ENCODE measurements at regions of chr5 and their contacts with region 1.

Region 1: DNA sequence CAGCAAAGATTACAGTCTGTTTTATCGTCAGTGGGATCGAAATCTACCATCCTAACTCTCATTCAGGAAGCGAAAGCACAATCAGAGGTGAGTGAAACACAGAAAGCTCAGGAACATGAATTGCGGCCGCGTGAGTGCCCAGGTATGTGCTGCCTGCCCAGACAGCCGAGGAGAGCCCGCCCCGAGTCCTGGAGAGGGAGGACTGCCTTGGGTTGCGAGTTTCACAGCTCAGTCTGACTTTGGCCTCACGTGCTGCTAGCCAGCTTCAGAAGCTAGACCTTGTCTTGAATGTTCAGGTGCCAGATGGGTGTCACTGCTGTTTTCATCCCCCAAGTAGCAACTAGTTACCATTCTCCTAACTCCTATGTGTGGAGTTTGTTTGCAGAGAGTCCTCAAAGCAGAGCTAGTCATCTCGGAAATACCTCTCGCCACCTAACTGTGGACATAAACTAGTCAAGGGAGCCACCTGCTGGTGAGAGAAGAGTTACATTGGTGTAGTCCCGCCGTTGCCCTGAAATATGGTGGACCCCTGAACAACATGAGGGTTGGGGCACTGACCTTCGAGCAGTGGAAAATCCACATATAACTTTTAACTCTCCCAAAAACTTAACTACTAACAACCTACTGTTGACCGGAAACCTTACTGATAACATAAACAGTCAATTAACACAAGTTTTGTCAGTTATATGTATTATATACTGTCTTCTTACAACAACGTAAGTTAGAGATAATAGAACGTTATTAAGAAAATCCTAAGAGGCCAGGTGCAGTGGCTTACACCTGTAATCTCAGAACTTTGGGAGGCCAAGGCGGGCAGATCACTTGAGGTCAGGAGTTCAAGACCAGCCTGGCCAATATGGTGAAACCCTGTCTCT is 80.9 kb downstream of the GOLPH3 start:
- ATAC-seq: peak; percentile 77 to 94 (median 86)
- H3K4me3 ChIP-seq: no peak overlapping the region
- H3K27ac ChIP-seq: no peak overlapping the region
- H3K4me1 ChIP-seq: peaks cover 3 to 13% of the 10 kb centered on the region in 2 donors

Region 2: DNA sequence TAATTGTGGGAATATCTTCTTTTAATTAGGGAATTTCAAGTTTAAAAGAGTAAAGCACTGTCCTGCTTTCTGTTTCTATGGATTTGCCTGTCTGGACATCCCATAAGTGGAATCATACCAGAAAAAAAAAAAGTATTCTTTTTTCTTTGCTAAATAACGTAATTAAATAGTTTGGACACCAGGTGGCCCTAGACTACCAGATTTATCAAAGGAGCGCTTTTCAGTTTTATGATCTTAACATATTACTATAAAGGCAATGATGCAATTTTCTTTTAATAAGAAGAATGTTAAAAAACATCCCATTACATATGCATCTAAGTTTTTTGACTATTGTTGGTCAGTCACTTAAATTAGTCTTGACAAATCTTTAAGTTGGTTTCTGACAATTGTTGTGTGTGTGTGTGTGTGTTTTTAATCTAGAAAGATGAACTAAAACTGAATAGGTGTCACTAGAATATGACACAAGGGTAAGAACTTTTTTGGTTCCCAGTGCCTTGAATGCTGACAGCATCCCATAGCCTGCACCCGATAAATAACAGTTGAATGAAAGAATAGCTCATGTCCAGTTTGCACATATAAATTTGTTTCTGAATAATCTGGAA is 511.6 kb before region 1 on chr5:
- in situ Hi-C with region 1: loop called in 7 of 9 experiments (anchors 25 kb)
- ATAC-seq: peak in 1 of 8 experiments; percentile 17
- H3K4me3 ChIP-seq: no peak overlapping the region
- H3K27ac ChIP-seq: no peak overlapping the region
- H3K4me1 ChIP-seq: no peaks in the 10 kb centered on the region

Region 3: GRCh38 chr5:32241034-32241783 is 148.0 kb after region 1 on chr5:
- in situ Hi-C with region 1: no loop called
- ATAC-seq: no peak
- H3K4me3 ChIP-seq: no peak overlapping the region
- H3K27ac ChIP-seq: no peak overlapping the region
- H3K4me1 ChIP-seq: no peaks in the 10 kb centered on the region